ENCODE measurements at regions of chr7 and their contacts with region 1.

Region 1: GRCh38 chr7:156473476-156474240 is 166.9 kb upstream of the RNF32 start:
- DNase-seq: no peak
- ATAC-seq: peak; percentile 67
- H3K4me3 ChIP-seq: no peak overlapping the region
- H3K27ac ChIP-seq: no peak overlapping the region
- H3K4me1 ChIP-seq: no peaks in the 10 kb centered on the region
- H3K27me3 ChIP-seq: no peaks in the 10 kb centered on the region
- CTCF ChIP-seq: peak; percentile 59

Region 2: DNA sequence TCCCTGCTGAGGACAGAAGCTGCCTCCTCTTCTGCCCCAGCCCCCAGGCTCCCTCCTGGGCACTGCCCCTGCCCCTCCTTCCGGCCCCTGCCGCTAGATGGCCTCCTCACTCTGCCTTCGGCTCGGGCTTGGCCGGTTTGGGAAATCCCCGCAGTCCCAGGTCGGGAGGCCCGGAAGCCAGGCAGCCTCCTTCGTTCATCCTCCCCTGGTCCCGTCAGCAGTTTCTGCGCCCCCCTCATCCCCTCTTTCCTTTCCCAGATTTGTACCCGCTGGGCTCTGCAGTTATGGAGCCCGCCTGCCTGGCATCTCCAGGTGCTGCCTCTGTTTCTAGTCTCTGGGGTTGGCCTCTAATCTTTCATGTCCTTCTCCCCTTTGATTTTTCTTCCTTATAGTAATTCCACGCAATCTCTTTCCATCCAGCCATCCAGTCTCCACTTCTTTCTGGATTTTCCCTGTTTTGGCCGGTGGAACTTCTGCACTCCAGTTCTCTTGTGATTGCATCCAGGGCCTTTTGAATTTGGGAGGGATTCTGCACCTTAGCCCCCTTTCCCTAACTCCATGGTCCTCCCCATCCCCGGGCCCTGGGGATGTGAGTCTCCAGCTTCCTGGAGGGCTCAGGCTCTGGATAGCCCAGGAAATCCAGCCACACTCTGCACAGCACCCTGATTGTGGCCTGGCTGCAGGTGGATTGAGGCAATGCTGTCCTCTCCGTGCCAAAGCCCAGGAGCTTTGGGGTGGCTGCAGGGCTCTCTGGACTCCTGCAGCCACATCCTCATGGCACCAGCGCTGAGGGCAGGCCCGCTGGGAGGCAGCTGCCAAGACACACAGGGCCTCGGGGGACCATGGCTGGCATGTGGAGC is 658.1 kb before region 1 on chr7:
- intact Hi-C with region 1: loop called (anchors 10 kb)
- DNase-seq: peak; percentile 89
- ATAC-seq: peak; percentile 84
- H3K4me3 ChIP-seq: no peak overlapping the region
- H3K27ac ChIP-seq: no peak overlapping the region
- H3K4me1 ChIP-seq: peaks cover 7% of the 10 kb centered on the region
- H3K27me3 ChIP-seq: peaks cover 42% of the 10 kb centered on the region
- CTCF ChIP-seq: peak; percentile 64

Region 3: GRCh38 chr7:156334636-156335035 is 139.0 kb before region 1 on chr7:
- intact Hi-C with region 1: no loop called
- DNase-seq: no peak
- ATAC-seq: peak; percentile 70
- H3K4me3 ChIP-seq: no peak overlapping the region
- H3K27ac ChIP-seq: no peak overlapping the region
- H3K4me1 ChIP-seq: no peaks in the 10 kb centered on the region
- H3K27me3 ChIP-seq: no peaks in the 10 kb centered on the region
- CTCF ChIP-seq: no peak